Posterior vena cava (tissue), 2 donors: ENCODE measurements at regions of chr5 and their contacts with region 1.

Region 1: DNA sequence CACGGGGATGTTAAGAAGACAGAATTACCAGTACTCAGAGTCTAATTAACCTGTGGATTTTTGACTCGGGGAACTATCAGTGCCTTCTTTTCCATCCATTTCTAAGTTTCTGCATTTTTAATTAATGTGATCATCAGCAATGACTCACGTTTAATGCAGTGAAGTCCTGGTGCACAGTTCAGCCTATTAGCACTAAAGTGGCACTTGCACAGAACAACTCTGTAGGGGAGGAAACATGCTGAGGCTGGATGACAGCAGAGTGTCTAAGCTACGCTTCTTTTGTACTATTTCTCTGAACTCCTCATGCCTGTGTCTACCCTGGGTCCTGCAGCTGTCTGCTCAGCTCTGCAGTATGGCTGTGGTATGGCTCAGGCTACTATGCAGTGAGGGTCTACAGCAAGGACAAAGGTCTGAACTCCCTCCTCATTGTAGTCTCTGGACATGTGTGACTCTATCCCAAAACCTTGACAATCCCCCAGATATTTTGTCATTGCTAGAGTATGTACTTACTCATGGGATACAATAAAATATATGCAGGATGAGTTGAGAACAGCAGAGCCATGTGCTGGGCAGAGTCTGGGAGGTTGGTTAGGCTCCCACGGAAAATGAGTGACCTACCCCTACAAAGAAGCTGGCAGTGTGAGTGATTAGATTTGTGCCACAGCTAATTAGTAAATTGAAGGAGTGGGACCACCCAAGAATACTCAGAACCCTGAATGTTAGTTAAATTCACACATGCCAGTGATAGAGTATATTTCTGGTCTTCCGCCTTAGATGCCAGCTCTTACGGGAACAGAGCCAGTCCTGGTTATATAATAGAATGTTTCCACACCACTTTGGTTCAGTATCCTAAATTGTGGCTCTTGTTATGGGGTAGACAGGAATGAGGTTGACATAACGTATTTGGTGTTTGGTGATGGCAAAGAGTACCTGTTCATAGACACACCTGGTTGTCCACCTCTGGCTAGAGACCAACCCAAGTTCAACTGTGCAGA is 148.0 kb downstream of the GHR start:
- DNase-seq: no peak

Region 2: DNA sequence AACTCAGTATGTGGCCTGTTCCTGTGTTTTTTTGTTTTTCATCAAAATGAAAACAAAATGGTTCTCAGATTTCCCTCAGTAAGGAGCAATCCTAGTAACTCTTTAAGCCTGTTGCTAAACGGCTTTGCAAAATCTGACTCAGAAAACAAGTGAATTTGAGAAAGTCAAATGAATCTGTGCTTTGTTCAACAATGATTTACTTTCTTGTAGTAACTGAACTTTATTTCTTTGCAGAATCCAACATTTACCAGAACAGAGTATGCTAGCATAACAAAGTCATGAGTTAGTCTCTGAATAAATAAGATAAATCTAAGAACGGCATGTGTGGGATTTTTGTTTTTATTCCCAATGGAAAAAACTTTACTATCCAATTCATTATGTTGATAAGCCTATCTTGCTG is 794.8 kb before region 1 on chr5:
- intact Hi-C with region 1: no loop called
- DNase-seq: no peak

Region 3: GRCh38 chr5:42547141-42547540 is 24.1 kb before region 1 on chr5:
- intact Hi-C with region 1: no loop called
- DNase-seq: no peak

Region 4: GRCh38 chr5:43161244-43161643 is 590.0 kb after region 1 on chr5:
- intact Hi-C with region 1: loop called in 1 of 2 experiments (anchors 5 kb)
- DNase-seq: no peak